Activated T-helper 1 cell treated with anti-CD3 and anti-CD28 coated beads, Interleukin-12 subunit alpha, Interleukin-12 subunit beta, Interleukin-2, Interleukin-4 antibody, amounts not matched to agents 30 ng/mL and 10 ng/mL and 1 ng/mL, durations not matched to agents 14 hours and 24 hours and 36 hours (primary cell): ENCODE measurements at regions of chr6 and their contacts with region 1.

Region 1: GRCh38 chr6:116253505-116254296 is at the start of gene TSPYL4:
- DNase-seq: peak; percentile 88
- H3K4me3 Mint-ChIP-seq: no peak within 1 kb of the TSS
- H3K27ac Mint-ChIP-seq: no peak within 1 kb of the TSS
- H3K4me1 Mint-ChIP-seq: no peaks in the 10 kb centered on the region
- H3K27me3 Mint-ChIP-seq: no peaks in the 10 kb centered on the region
- total RNA-seq, gene TSPYL4: 20.4 and 21.4 TPM in 2 replicates

Region 2: GRCh38 chr6:114997813-114998292 is 1255.8 kb before region 1 on chr6:
- intact Hi-C with region 1: loop called (anchors 10 kb)
- DNase-seq: no peak
- H3K4me3 Mint-ChIP-seq: no peak overlapping the region
- H3K27ac Mint-ChIP-seq: no peak overlapping the region
- H3K4me1 Mint-ChIP-seq: peaks cover 26% of the 10 kb centered on the region
- H3K27me3 Mint-ChIP-seq: no peaks in the 10 kb centered on the region

Region 3: DNA sequence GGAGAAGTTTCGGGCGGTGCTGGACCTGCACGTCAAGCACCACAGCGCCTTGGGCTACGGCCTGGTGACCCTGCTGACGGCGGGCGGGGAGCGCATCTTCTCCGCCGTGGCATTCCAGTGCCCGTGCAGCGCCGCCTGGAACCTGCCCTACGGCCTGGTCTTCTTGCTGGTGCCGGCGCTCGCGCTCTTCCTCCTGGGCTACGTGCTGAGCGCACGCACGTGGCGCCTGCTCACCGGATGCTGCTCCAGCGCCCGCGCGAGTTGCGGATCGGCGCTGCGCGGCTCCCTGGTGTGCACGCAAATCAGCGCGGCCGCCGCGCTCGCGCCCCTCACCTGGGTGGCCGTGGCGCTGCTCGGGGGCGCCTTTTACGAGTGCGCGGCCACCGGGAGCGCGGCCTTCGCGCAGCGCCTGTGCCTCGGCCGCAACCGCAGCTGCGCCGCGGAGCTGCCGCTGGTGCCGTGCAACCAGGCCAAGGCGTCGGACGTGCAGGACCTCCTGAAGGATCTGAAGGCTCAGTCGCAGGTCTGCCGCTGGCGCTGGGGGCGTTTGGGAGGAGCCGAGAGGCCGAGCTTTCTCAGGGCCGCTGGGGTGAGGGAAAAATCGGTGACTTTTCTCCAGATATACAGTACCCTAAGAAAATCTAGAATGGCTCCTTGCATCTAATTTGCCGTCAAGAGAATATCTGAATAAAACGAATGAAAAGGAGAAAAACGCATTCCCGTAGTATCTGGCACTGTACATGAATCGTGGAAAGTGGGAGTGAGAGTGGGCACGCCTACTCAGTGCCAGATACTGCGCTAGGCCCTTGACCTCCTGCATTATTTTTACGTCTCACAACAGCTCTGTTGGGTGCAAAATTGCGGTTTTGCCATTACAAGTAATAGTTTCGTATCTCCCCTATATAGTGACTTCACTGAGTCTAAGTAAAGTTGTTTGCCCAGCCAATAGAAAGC is 208.5 kb after region 1 on chr6:
- intact Hi-C with region 1: loop called (anchors 1 kb)
- DNase-seq: peak; percentile 67
- H3K4me3 Mint-ChIP-seq: peak overlapping the region; percentile 87
- H3K27ac Mint-ChIP-seq: peak overlapping the region; percentile 87
- H3K4me1 Mint-ChIP-seq: peaks cover 89% of the 10 kb centered on the region
- H3K27me3 Mint-ChIP-seq: peaks cover 1% of the 10 kb centered on the region

Region 4: DNA sequence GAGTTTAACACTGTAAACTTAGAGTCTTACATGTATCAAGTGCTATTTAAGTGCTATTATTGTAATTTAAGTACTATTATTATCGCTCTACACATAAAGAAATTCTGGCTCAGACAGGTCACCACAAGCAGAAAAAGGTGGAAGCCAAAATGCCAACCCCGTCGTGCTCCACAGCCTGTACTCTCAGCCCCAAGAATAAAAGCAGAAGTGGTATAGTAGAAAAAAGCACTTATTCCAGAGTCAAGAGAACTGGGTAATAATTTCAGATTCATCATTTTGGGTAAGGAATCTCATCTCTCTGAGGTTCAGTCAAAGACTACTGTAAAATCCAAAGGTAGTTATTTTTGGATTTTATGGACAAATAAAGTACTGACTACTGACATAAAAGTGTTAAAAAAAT is 413.9 kb after region 1 on chr6:
- intact Hi-C with region 1: loop called (anchors 1 kb)
- DNase-seq: no peak
- H3K4me3 Mint-ChIP-seq: peak overlapping the region; percentile 100
- H3K27ac Mint-ChIP-seq: peak overlapping the region; percentile 97
- H3K4me1 Mint-ChIP-seq: peaks cover 45% of the 10 kb centered on the region
- H3K27me3 Mint-ChIP-seq: peaks cover 6% of the 10 kb centered on the region

Region 5: GRCh38 chr6:116680975-116681808 is 427.5 kb after region 1 on chr6 and contains the start of gene KPNA5:
- intact Hi-C with region 1: loop called (anchors 1 kb)
- DNase-seq: peak; percentile 84
- H3K4me3 Mint-ChIP-seq: peak within 1 kb of the TSS; percentile 97
- H3K27ac Mint-ChIP-seq: peak within 1 kb of the TSS; percentile 97
- H3K4me1 Mint-ChIP-seq: peaks cover 25% of the 10 kb centered on the region
- H3K27me3 Mint-ChIP-seq: no peaks in the 10 kb centered on the region
- total RNA-seq, gene KPNA5: 6.1 and 7.6 TPM in 2 replicates